Common myeloid progenitor, CD34-positive (primary cell): ENCODE measurements at regions of chr10 and their contacts with region 1.

Region 1: DNA sequence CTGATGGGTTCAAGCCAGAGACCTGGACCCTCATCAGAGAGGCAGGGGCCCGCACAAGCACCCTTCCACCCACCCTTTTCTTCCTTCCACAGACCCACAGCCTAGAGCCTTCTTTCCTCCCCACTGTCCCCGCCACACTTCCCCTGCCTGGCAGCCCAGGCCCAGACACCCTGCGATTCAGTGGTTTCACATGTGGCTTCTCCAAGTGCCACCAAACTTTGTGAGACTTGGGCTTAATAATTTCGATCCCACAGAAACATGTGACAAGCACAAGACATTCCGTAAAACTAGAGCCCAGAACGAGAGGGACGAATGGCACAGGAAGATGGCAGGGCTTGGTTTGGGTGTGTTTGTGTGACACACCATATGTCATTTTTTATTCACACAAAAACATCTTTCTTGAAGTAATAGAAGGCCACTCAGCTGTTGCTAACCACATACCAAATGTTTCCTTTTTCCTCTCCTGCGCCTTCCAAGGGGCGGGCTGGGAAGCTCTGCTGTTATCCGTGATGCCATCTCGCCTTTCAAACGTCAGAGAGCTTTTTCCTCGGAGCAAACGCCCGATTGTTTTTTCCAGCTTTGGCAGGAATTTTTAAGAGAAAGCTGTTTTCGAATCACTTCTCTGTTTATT is 162.9 kb downstream of the GRK5 start:
- DNase-seq: peak; percentile 41 to 72 (median 65)
- H3K4me3 ChIP-seq: peak overlapping the region in 4 of 7 experiments; percentile 12 to 63 (median 36)
- H3K27ac ChIP-seq: no peak overlapping the region
- H3K4me1 ChIP-seq: peaks cover 0 to 25% (median 17%) of the 10 kb centered on the region in 4 experiments
- H3K27me3 ChIP-seq: peaks cover 0 to 9% (median 2%) of the 10 kb centered on the region in 5 experiments

Region 2: DNA sequence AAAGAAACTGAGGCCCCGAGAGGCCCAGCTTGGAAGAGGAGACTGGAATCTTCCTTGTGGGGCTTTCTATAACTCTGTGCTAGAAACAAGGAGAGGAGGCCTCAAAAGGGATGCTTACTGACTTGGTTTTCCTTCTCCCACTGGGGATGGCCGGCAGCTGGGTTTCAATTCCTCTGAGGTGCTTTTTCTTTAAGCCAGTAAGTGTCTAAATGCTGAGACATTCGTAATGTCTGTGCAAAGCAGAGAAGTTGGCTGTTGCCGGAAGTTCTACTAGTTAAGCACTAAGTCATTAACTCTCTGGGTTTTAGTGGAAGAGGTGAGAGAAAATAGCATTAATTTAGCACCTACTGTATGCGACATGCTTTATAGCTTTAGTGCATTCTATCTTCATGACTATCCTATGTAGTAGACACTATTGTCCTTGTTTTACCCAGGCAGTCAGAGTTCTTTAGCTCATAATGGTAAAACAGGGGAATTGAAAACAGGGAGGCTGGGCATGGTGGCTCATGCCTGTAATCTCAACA is 37.1 kb after region 1 on chr10:
- CTCF ChIA-PET with region 1: interaction called, 11 read pairs
- POLR2A ChIA-PET with region 1: no interaction called
- DNase-seq: no peak
- H3K4me3 ChIP-seq: no peak overlapping the region
- H3K27ac ChIP-seq: no peak overlapping the region
- H3K4me1 ChIP-seq: peaks cover 5 to 16% (median 9%) of the 10 kb centered on the region in 4 experiments
- H3K27me3 ChIP-seq: no peaks in the 10 kb centered on the region